Brain microvascular endothelial cell (primary cell): ENCODE measurements at regions of chr12 and their contacts with region 1.

Region 1: GRCh38 chr12:127293507-127294310 is 973.3 kb upstream of the TMEM132C start:
- DNase-seq: peak; percentile 71
- H3K4me3 ChIP-seq: no peak overlapping the region
- H3K27ac ChIP-seq: no peak overlapping the region
- H3K27me3 ChIP-seq: no peaks in the 10 kb centered on the region
- CTCF ChIP-seq: peak; percentile 98

Region 2: DNA sequence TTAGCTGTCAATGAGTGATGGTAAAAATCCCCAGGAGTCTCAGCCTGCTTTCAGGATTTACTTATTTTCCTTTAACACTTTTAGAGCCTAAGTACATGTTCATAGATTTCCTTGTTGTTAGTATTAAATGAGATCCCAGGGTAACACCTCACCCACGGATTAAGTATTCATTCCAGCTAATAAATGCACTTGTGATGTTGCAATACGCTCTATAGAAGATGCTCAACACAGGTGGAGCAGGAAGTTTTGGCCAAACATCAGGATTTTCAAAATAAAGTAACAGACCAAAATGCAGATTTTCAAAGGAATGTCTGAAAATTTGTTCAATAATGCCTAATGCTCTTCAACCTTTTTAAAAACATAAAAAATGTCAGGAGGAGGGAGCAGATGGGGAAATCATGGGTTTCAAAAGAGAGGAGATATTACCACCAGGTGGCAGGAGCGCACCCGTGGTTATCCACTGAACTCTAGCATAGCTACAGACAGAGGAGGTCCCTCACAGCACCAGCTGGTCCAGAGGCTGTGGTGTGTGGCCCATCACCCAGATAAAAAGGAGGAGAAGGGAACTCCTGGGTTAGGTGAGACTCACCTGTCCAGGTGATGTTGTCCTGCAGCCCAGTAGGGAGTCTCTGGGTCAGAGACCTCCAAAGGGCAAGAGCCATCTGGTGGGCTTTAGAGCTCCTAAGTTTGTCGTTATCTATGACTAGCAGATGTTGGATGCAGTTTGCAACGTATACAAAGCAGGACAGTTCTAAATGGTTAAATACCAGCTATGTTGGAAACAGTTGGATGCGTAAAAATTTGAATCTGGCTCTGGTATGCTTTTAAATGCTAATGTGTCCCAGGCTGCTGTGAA is 185.1 kb before region 1 on chr12:
- in situ Hi-C with region 1: loop called (anchors 25 kb)
- DNase-seq: peak; percentile 76
- H3K4me3 ChIP-seq: no peak overlapping the region
- H3K27ac ChIP-seq: no peak overlapping the region
- H3K27me3 ChIP-seq: no peaks in the 10 kb centered on the region
- CTCF ChIP-seq: peak; percentile 81

Region 3: DNA sequence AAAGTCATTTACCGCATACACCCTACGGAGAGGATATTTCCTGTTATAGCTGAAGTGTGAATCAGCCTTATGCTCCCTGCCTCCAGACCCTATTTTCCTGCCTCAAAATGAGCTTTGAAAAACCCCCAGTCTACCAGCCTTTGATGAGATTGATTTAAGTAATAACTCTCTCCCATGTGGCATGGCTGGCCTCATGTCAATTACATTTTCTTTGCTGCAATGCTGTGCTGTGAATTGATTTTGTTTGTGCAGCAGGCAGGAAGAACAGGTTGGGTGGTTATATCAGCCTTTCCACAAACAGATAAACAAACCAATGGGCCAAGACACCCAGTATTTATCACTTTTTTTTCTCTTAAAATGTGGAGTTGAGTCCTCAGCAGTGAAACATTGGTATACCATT is 132.2 kb before region 1 on chr12:
- in situ Hi-C with region 1: no loop called
- DNase-seq: no peak
- H3K4me3 ChIP-seq: no peak overlapping the region
- H3K27ac ChIP-seq: no peak overlapping the region
- H3K27me3 ChIP-seq: no peaks in the 10 kb centered on the region
- CTCF ChIP-seq: no peak